Activated CD8-positive, alpha-beta T cell treated with anti-CD3 and anti-CD28 coated beads for 36 hours (primary cell): ENCODE measurements at regions of chr16 and their contacts with region 1.

Region 1: DNA sequence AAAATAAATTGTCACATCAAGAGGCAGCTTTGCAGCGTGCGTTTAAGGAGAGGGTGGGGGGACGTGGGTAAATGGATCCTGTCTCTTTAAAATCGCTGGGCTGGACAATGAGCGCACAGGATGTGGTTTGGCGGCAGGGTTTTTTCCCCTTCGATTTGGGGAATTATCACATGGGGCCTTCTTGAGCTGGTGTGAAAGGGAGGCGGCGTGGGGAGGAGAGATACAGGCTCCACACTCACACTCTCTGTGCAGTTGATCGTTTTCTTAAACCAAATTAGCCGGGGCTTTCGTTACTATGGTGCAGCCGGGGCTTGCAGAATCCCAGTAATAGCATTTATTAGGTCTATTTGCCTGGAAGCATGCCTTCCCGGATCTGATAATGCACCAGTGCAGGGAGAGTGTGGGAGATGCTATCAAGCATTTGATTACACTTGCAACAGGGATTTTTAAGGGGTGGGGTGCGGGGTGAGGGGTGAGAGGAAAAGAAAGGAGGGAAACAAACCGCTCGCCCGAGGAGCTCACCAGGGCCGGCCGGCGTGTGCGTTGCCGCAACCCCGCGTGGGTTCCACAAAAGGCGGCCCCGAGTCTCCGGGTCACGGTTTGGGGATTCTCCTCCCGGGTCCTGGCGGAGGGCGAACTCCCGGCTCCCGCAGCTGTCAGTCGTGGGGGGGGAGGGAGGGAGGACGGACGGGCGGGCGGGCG is 58.9 kb upstream of the GSE1 start:
- DNase-seq: peak; percentile 95
- ATAC-seq: peak; percentile 52
- H3K4me3 Mint-ChIP-seq: peak overlapping the region; percentile 78
- H3K27ac Mint-ChIP-seq: peak overlapping the region; percentile 86
- H3K4me1 Mint-ChIP-seq: peaks cover 54% of the 10 kb centered on the region
- H3K27me3 Mint-ChIP-seq: no peaks in the 10 kb centered on the region
- CTCF ChIP-seq: no peak

Region 2: GRCh38 chr16:85491058-85491771 is 63.0 kb before region 1 on chr16:
- CTCF ChIA-PET with region 1: interaction called, 10 read pairs
- POLR2A ChIA-PET with region 1: no interaction called
- intact Hi-C with region 1: no loop called
- DNase-seq: peak; percentile 72
- ATAC-seq: peak; percentile 88
- H3K4me3 Mint-ChIP-seq: no peak overlapping the region
- H3K27ac Mint-ChIP-seq: no peak overlapping the region
- H3K4me1 Mint-ChIP-seq: peaks cover 19% of the 10 kb centered on the region
- H3K27me3 Mint-ChIP-seq: no peaks in the 10 kb centered on the region
- CTCF ChIP-seq: peak; percentile 76

Region 3: DNA sequence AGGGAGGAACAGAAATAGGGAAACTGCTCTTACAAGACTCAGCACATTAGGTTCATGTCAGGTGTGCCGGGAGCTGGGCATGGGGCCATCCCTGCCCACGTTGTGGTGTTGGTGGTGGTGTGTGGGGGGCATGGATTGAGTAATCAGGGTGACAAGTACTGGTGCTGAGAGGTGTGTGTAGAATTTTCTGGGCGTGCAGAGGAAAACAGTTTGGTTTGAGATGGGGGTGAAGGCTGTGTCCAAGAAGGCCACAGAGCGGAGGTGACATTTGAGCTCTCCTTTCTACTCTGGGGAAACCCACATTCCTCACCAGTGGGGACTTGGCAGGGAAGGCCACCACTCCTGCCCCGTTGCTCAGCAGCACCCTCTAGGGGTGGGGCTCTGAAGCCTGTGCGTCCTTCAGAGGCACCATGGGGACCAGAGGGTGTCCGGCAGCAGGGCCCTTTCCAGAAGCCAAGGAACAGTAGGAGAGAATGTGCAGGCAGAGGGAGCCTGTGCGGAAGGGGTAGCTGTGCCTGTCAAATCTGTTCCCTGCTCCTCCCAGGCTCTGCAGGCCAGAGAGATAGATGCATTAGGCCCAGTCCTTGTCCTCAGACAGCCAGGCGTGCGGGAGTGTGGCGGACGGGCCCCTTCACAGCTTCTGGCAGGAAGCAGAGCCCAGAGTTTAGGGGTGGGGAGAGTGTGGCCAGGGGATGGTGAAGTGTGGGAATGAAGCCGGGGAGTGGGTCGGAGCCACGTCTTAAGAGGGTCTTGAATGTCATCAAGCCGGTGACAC is 10.2 kb after region 1 on chr16:
- CTCF ChIA-PET with region 1: interaction called, 13 read pairs
- POLR2A ChIA-PET with region 1: interaction called, 28 read pairs
- intact Hi-C with region 1: no loop called
- DNase-seq: peak; percentile 83
- ATAC-seq: peak; percentile 71
- H3K4me3 Mint-ChIP-seq: no peak overlapping the region
- H3K27ac Mint-ChIP-seq: peak overlapping the region; percentile 18
- H3K4me1 Mint-ChIP-seq: peaks cover 67% of the 10 kb centered on the region
- H3K27me3 Mint-ChIP-seq: no peaks in the 10 kb centered on the region
- CTCF ChIP-seq: peak; percentile 79

Region 4: DNA sequence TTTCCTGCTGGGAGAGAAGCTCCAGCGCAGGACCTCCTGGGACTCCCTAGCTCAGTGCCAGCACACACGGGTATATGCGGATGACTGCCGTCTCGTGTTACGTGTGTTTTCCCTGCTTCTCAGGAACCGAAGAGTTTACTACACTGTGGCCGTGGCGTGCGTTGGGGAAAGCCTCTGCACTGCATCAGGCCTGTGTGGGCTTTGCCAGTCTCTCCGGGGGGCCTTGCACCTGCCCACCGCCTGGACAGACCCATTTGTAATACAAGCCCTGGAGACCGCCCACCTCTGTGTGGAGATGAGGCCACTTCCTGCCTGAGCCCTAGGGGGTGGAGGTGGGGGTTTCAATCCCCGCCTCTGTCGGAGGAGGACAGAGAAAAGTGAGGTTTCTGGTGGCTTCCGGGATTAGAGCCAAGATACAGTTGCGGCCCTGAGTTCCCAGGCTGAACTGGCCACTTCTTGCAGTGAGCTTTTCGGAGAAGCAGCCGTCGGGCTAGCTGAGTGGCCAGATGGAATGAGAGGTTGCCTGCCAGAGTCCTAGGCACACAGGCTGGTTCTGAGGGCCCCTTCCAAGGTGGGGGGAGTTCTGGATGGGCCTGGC is 15.5 kb after region 1 on chr16:
- CTCF ChIA-PET with region 1: interaction called, 13 read pairs
- POLR2A ChIA-PET with region 1: interaction called, 28 read pairs
- intact Hi-C with region 1: no loop called
- DNase-seq: peak; percentile 86
- ATAC-seq: peak; percentile 71
- H3K4me3 Mint-ChIP-seq: peak overlapping the region; percentile 52
- H3K27ac Mint-ChIP-seq: peak overlapping the region; percentile 89
- H3K4me1 Mint-ChIP-seq: peaks cover 72% of the 10 kb centered on the region
- H3K27me3 Mint-ChIP-seq: no peaks in the 10 kb centered on the region
- CTCF ChIP-seq: no peak

Region 5: GRCh38 chr16:85610508-85611332 is 56.5 kb after region 1 on chr16:
- CTCF ChIA-PET with region 1: interaction called, 59 read pairs
- POLR2A ChIA-PET with region 1: interaction called, 52 read pairs
- intact Hi-C with region 1: loop called (anchors 2 kb)
- DNase-seq: peak; percentile 94
- ATAC-seq: peak; percentile 67
- H3K4me3 Mint-ChIP-seq: peak overlapping the region; percentile 63
- H3K27ac Mint-ChIP-seq: peak overlapping the region; percentile 72
- H3K4me1 Mint-ChIP-seq: peaks cover 48% of the 10 kb centered on the region
- H3K27me3 Mint-ChIP-seq: no peaks in the 10 kb centered on the region
- CTCF ChIP-seq: peak; percentile 98